ENCODE measurements at regions of chr4 and their contacts with region 1.

Region 1: DNA sequence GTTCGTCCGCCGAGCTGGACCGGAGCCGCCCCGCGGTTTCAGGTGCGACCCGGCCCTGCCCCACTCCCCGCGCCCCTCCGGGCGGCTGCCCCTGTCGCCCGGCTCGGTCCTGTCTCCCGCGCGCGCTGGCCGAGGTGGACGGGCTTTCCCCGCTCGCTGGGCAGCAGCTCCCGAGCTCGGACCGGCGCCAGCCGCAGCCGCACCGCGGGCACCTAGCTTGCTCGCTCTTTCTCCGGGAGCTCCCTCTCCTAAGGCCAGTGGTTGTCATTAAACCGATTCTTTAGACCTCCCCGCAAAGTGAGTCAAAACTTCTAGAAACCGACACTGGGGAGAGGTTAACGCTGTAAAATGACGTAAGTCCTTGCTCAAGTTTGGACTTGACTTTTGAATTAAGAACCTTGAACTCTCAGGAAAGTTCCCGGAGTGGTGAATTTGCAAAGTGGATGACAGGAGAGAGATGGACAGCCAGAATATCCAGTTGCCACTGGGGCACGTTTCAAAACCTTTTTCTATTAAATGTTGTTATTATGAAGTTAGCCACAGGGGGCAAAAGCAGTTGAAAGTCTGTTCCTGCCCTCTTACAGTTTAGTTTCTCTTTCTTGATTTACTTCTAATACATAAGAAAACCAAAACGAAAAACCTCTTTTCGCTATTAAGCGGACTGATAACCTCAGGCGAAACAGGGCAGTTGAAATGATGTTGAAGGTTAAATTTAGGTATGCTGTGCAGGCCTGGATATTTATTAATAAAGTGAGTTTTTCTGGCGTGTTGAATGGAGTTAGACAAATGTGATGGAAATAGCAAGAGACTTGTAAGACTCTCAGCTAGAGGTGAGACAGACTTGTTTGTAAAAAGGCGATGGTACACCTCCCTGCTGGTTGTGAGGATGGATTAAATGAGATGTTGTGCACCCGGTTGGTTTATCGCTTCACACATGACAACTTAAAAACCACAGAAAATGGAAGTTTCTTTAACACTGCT is 847 bp downstream of the PI4K2B start:
- DNase-seq: peak; percentile 48
- H3K4me3 Mint-ChIP-seq: peak overlapping the region; percentile 96
- H3K27ac Mint-ChIP-seq: peak overlapping the region; percentile 97
- H3K4me1 Mint-ChIP-seq: peaks cover 48% of the 10 kb centered on the region
- H3K27me3 Mint-ChIP-seq: no peaks in the 10 kb centered on the region

Region 2: GRCh38 chr4:24584175-24584850 is 650.4 kb before region 1 on chr4 and contains the start of gene DHX15:
- CTCF ChIA-PET with region 1: no interaction called
- POLR2A ChIA-PET with region 1: interaction called, 12 read pairs
- DNase-seq: peak; percentile 93
- H3K4me3 Mint-ChIP-seq: peak within 1 kb of the TSS; percentile 90
- H3K27ac Mint-ChIP-seq: peak within 1 kb of the TSS; percentile 85
- H3K4me1 Mint-ChIP-seq: peaks cover 42% of the 10 kb centered on the region
- H3K27me3 Mint-ChIP-seq: no peaks in the 10 kb centered on the region
- total RNA-seq, gene DHX15: 150 TPM

Region 3: DNA sequence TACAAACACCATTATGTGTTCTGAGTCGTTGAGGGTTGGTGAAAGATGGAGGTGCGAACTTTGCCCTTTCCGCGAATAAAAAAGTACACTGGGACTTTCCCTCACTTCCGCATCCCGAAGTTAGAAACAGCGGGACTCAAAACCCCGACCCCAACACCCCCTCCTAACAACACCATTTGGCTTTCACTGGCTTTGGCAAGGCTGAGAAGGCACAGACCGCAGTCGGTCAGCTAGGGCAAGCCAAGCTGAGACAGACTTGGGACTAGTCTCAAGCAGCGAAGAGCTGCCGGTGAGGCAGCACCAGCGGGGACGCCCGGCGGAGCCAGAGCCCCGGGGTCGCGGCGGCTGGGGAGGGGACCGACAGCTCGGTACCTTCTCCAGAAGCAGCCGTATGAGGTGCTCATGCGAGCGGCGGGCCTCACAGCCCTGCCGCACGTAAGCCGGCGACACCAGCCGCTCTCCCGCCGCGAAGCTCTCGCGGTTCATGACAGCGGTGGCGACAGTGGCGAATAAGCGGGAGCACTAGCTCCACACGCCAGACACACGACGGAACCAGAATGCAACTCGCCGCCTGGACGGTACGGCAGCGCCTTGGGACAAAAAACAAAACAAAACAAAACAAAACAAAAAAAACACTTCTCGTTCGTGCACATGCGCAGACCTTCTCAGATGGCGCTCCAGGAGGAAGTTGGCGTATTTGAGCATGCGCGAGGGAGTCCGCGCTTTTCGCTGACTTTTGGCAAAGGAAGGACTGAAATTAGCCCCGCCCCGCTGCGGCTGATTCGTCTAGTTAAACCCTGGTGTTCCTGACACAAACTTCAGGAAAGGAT is 74.6 kb before region 1 on chr4 and contains the start of gene SEPSECS:
- CTCF ChIA-PET with region 1: interaction called, 15 read pairs
- POLR2A ChIA-PET with region 1: interaction called, 144 read pairs
- DNase-seq: peak; percentile 95
- H3K4me3 Mint-ChIP-seq: peak within 1 kb of the TSS; percentile 93
- H3K27ac Mint-ChIP-seq: peak within 1 kb of the TSS; percentile 93
- H3K4me1 Mint-ChIP-seq: peaks cover 45% of the 10 kb centered on the region
- H3K27me3 Mint-ChIP-seq: no peaks in the 10 kb centered on the region
- total RNA-seq, gene SEPSECS: 15.1 to 15.2 TPM

Region 4: DNA sequence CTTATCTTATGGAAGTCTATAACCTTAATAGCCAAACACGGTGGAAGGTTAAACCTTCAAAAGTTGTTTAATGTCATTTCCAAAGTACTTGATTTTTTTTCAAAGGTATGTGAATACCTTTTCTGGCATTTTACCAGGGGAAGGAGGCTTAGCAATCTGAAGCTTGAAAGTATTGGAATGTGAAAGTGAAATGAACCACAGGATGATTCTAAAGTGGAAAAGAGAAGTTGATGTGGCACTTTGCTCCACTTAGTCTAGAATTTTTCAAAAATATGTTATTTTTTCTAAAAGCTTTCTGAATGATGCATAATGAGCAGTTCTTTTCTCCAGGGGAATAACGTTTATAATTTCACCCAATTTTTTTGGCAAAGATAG is 18.4 kb after region 1 on chr4:
- CTCF ChIA-PET with region 1: interaction called, 3 read pairs
- POLR2A ChIA-PET with region 1: interaction called, 12 read pairs
- DNase-seq: no peak
- H3K4me3 Mint-ChIP-seq: no peak overlapping the region
- H3K27ac Mint-ChIP-seq: no peak overlapping the region
- H3K4me1 Mint-ChIP-seq: peaks cover 24% of the 10 kb centered on the region
- H3K27me3 Mint-ChIP-seq: no peaks in the 10 kb centered on the region

Region 5: GRCh38 chr4:25330905-25331808 is 96.5 kb after region 1 on chr4:
- CTCF ChIA-PET with region 1: interaction called, 5 read pairs
- POLR2A ChIA-PET with region 1: interaction called, 18 read pairs
- DNase-seq: peak; percentile 22
- H3K4me3 Mint-ChIP-seq: peak overlapping the region; percentile 84
- H3K27ac Mint-ChIP-seq: peak overlapping the region; percentile 93
- H3K4me1 Mint-ChIP-seq: peaks cover 21% of the 10 kb centered on the region
- H3K27me3 Mint-ChIP-seq: no peaks in the 10 kb centered on the region

Region 6: DNA sequence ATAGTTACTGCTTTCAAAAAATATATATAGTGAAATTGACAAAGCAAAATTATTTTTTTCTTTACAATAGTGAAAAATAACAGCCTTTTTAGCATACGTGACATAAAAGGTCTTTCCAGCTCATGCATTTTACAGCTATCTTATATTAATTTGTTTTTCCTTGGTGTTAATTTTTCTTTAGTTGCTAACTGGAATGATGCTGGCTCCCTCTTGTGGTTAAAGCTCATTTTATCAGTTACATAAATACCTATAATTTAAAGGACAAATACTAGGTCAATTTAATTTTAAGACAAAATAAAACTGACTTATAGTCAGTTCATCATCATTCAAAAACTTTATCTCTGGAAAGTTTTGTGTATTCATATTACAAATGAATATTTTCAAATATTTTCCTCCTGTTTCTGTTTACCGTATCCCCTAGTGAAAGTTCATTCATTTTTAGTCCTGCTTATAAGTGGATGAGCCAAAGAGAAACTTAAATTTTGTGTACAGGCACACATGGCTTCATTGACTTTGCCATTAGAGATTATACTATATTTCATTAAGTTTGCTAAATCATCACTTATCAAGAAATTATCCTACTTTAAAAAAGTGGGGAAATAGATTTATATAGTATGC is 132.4 kb after region 1 on chr4:
- CTCF ChIA-PET with region 1: interaction called, 6 read pairs
- POLR2A ChIA-PET with region 1: interaction called, 10 read pairs
- DNase-seq: no peak
- H3K4me3 Mint-ChIP-seq: no peak overlapping the region
- H3K27ac Mint-ChIP-seq: no peak overlapping the region
- H3K4me1 Mint-ChIP-seq: no peaks in the 10 kb centered on the region
- H3K27me3 Mint-ChIP-seq: no peaks in the 10 kb centered on the region

Region 7: DNA sequence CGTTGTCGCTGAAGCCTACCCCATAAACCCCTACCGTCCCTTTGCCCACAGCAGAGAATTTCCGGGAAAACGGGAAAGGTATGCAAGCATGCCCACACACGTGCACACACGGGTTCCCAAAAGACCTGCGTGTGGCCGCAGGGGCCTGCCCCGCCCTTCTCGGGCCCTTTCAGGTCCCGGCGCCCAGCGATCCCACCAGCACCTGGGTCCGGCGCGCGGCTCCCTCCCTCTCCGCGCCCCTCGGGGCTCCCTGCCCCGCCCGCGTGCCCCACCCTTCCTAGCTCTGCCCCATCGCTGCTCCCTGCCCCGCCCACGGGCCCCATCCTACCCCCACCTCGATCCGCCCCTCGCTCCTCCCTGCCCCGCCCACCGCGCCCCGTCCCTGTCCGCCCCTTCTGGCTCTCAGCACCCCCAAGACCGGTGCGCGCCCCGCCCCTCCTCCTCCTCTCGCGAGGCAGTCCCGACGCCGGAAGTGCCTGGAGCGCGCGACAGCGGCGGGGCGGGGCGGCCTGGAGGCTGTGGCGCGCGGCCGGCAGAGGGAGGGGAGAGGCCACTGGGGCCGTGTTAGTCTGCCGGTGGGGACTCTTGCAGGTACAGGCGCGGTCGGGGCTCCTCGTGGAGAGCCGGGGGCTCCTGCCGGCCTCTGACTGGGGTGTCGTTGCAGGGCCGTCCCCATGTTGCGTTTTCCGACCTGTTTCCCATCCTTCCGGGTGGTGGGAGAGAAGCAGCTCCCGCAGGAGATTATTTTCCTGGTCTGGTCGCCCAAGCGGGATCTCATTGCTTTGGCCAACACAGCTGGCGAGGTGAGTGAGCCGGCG is 142.3 kb after region 1 on chr4 and contains the start of gene ANAPC4:
- CTCF ChIA-PET with region 1: interaction called, 6 read pairs
- POLR2A ChIA-PET with region 1: interaction called, 33 read pairs
- DNase-seq: peak; percentile 98
- H3K4me3 Mint-ChIP-seq: no peak within 1 kb of the TSS
- H3K27ac Mint-ChIP-seq: peak within 1 kb of the TSS; percentile 85
- H3K4me1 Mint-ChIP-seq: peaks cover 11% of the 10 kb centered on the region
- H3K27me3 Mint-ChIP-seq: no peaks in the 10 kb centered on the region
- total RNA-seq, gene ANAPC4: 41.0 to 41.2 TPM

Region 8: GRCh38 chr4:25767877-25768725 is 533.4 kb after region 1 on chr4:
- CTCF ChIA-PET with region 1: no interaction called
- POLR2A ChIA-PET with region 1: no interaction called
- DNase-seq: peak; percentile 17
- H3K4me3 Mint-ChIP-seq: no peak overlapping the region
- H3K27ac Mint-ChIP-seq: no peak overlapping the region
- H3K4me1 Mint-ChIP-seq: no peaks in the 10 kb centered on the region
- H3K27me3 Mint-ChIP-seq: no peaks in the 10 kb centered on the region